Heart left ventricle (tissue), 16 donors: ENCODE measurements at regions of chr7 and their contacts with region 1.

Region 1: GRCh38 chr7:112129655-112130323 is 76.4 kb downstream of the DOCK4 start:
- DNase-seq: peak in 3 of 5 donors; percentile 39 to 53 (median 51)
- ATAC-seq: peak; percentile 33 to 73 (median 56)
- H3K4me3 ChIP-seq: no peak overlapping the region
- H3K27ac ChIP-seq: peak overlapping the region in 11 of 12 donors; percentile 16 to 74 (median 45)
- H3K4me1 ChIP-seq: peaks cover 9 to 58% (median 45%) of the 10 kb centered on the region in 12 donors
- H3K27me3 ChIP-seq: no peaks in the 10 kb centered on the region
- CTCF ChIP-seq: no peak
- POLR2A ChIP-seq: no peak

Region 2: GRCh38 chr7:111887734-111888133 is 242.1 kb before region 1 on chr7:
- intact Hi-C with region 1: loop called in 1 of 10 experiments (anchors 5 kb)
- DNase-seq: peak in 4 of 5 donors; percentile 25 to 36 (median 30)
- ATAC-seq: peak; percentile 26 to 86 (median 38)
- H3K4me3 ChIP-seq: no peak overlapping the region
- H3K27ac ChIP-seq: peak overlapping the region in 3 of 12 donors; percentile 15 to 28 (median 26)
- H3K4me1 ChIP-seq: peaks cover 0 to 2% (median 0%) of the 10 kb centered on the region in 12 donors
- H3K27me3 ChIP-seq: no peaks in the 10 kb centered on the region
- CTCF ChIP-seq: no peak
- POLR2A ChIP-seq: no peak